ENCODE measurements at regions of chr5 and their contacts with region 1.

Region 1: DNA sequence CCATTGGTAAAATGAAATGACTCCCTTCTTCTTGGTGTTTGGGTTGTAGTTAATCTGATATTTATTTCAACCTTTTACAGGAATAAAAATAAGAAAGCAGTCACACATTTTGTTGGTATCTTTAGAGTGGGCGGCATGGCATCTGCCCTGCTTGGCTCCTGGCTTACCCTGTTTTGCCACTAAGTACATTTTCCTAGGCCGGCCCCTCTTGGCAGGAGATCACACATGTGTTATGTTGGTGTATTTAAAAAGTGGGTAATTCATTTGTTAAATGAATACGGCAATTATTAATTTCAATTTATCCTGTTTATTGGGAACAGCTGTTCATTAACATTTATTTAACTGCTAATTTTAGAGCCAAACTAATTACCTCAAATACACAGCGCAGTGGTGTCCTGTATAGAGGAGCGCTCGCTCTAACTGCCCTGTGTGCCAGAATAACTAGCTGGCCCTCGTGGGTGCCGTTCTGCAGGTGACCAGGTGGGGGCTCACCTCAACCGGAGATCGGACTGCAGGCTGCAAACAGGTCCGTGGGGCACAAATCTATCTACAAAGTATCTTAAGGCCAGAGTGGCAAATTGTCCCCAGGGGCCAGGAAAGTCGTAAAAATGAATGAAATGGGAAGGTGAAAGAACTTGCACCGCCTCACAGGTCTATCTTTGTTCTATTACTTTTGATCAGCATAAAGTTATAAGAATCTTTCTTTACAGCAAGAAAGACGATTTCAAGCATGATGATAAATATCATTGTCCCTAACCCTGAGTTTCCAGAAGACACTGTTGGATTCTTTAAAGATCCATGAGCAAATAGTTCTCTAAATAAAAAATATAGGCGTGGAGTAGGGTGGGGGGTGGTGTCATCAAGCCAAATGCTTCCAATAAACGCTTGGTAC is 26.2 kb upstream of the GPR151 start:
- DNase-seq: peak; percentile 80 to 86
- H3K4me3 ChIP-seq: no peak overlapping the region
- H3K27ac ChIP-seq: no peak overlapping the region
- H3K4me1 ChIP-seq: peaks cover 0 to 5% (median 0%) of the 10 kb centered on the region in 4 donors
- H3K27me3 ChIP-seq: no peaks in the 10 kb centered on the region
- CTCF ChIP-seq: peak in 5 of 7 experiments; percentile 56 to 85 (median 73)
- EP300 ChIP-seq: no peak
- POLR2A ChIP-seq: no peak

Region 2: DNA sequence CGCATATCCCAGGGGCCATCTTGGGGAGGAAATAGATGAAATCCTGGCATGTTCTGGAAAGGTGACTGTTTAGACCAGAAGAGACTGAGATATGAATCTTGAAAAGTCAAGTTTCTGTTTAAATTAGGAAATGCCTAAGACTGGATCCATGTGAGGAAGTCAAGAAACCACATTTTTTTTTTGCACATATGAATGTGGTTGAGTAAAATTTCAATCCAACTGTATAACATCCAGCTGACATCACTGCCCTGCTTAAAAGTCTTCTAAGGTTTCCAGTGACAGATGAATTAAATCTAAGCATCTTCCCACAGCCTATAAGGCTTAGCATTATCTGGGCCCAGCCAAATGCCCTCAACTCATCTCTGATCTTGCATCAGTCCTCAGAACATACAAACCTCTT is 142.7 kb before region 1 on chr5:
- intact Hi-C with region 1: no loop called
- DNase-seq: no peak
- H3K4me3 ChIP-seq: no peak overlapping the region
- H3K27ac ChIP-seq: no peak overlapping the region
- H3K4me1 ChIP-seq: no peaks in the 10 kb centered on the region
- H3K27me3 ChIP-seq: peaks cover 0 to 50% (median 0%) of the 10 kb centered on the region in 3 donors
- CTCF ChIP-seq: no peak
- EP300 ChIP-seq: no peak
- POLR2A ChIP-seq: no peak

Region 3: GRCh38 chr5:146965761-146966659 is 423.8 kb after region 1 on chr5:
- intact Hi-C with region 1: loop called (anchors 5 kb)
- DNase-seq: peak; percentile 56 to 90
- H3K4me3 ChIP-seq: no peak overlapping the region
- H3K27ac ChIP-seq: no peak overlapping the region
- H3K4me1 ChIP-seq: peaks cover 0 to 8% (median 3%) of the 10 kb centered on the region in 4 donors
- H3K27me3 ChIP-seq: no peaks in the 10 kb centered on the region
- CTCF ChIP-seq: peak in 5 of 7 experiments; percentile 78 to 96 (median 90)
- EP300 ChIP-seq: no peak
- POLR2A ChIP-seq: no peak

Region 4: GRCh38 chr5:147081311-147081764 is 539.1 kb after region 1 on chr5:
- intact Hi-C with region 1: no loop called
- DNase-seq: peak in 1 of 2 donors; percentile 30
- H3K4me3 ChIP-seq: no peak overlapping the region
- H3K27ac ChIP-seq: no peak overlapping the region
- H3K4me1 ChIP-seq: no peaks in the 10 kb centered on the region
- H3K27me3 ChIP-seq: no peaks in the 10 kb centered on the region
- CTCF ChIP-seq: no peak
- EP300 ChIP-seq: no peak
- POLR2A ChIP-seq: no peak

Region 5: GRCh38 chr5:147188200-147189108 is 646.2 kb after region 1 on chr5:
- intact Hi-C with region 1: loop called (anchors 5 kb)
- DNase-seq: peak; percentile 51 to 91
- H3K4me3 ChIP-seq: peak overlapping the region in 1 of 4 donors; percentile 7
- H3K27ac ChIP-seq: no peak overlapping the region
- H3K4me1 ChIP-seq: peaks cover 0 to 7% (median 0%) of the 10 kb centered on the region in 4 donors
- H3K27me3 ChIP-seq: no peaks in the 10 kb centered on the region
- CTCF ChIP-seq: peak in 5 of 7 experiments; percentile 72 to 92 (median 87)
- EP300 ChIP-seq: no peak
- POLR2A ChIP-seq: no peak

Measured in stomach (tissue), 19 donors.